ENCODE measurements at regions of chr17 and their contacts with region 1.

Region 1: GRCh38 chr17:59786536-59787319 is 79.3 kb downstream of the VMP1 start:
- DNase-seq: peak; percentile 83
- H3K4me3 ChIP-seq: no peak overlapping the region
- H3K27ac ChIP-seq: peak overlapping the region; percentile 98
- H3K4me1 ChIP-seq: no peaks in the 10 kb centered on the region
- H3K27me3 ChIP-seq: no peaks in the 10 kb centered on the region
- CTCF ChIP-seq: no peak

Region 2: GRCh38 chr17:59641799-59642489 is 144.8 kb before region 1 on chr17:
- intact Hi-C with region 1: no loop called
- DNase-seq: no peak
- H3K4me3 ChIP-seq: no peak overlapping the region
- H3K27ac ChIP-seq: peak overlapping the region; percentile 11
- H3K4me1 ChIP-seq: no peaks in the 10 kb centered on the region
- H3K27me3 ChIP-seq: no peaks in the 10 kb centered on the region
- CTCF ChIP-seq: no peak

Region 3: DNA sequence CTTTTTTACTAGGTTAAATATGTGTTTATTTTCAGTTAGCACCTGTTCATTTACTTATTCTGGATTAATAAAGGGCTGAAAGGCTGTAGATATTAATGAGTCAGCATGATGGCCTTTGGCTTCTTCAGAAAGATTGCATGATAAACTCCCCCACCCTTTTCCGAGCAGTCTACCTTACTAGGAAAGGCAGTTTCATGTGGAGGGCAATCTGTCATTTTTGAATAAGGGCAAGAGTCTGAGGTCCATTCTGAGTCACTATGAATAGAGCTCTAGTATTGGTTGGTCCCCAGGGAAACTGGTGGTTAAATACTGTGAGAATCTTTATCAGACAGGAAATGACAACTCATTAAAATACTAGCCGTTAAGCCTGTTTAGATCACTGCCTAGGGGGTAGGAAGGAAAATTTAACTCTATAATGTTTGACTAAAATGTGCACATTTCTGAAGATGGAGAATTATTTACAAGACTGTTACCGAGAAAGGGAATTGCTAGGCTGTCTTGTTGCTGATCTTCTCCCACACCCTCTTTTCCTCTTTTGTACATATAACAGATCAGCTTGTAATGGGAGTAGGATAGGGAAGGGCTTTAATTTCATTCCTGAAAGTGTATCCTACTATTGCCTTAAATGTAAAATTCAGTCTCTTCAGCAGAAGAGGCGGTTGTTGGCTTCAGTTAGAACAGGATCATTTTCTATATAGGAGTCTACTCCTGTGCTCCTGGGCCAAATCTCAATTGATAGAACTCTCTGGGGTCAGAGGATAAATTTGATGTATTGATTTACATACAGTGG is 42.7 kb after region 1 on chr17:
- intact Hi-C with region 1: loop called (anchors 5 kb)
- DNase-seq: peak; percentile 79
- H3K4me3 ChIP-seq: peak overlapping the region; percentile 7
- H3K27ac ChIP-seq: peak overlapping the region; percentile 94
- H3K4me1 ChIP-seq: peaks cover 12% of the 10 kb centered on the region
- H3K27me3 ChIP-seq: no peaks in the 10 kb centered on the region
- CTCF ChIP-seq: no peak

Region 4: DNA sequence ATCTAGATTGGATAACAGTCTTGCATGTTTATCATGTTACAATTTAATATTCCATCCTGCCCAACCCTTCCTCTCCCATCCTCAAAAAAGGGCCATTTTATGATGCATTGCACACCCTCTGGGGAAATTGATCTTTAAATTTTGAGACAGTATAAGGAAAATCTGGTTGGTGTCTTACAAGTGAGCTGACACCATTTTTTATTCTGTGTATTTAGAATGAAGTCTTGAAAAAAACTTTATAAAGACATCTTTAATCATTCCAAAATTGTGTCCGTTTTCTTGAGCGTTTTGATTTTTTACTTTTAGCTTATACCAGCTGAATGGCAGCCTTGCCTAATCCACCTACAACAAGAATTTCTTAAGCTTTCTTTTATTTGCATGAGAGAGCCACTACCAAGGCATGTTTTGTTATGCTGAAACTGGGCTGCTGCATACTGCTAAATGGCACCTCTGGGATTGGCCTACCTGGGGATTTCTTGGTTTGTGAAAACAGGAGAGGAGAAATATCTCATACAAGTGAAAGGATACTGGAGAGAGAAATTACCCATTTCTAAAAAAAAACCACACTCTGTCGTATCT is 53.7 kb after region 1 on chr17:
- intact Hi-C with region 1: loop called (anchors 2 kb)
- DNase-seq: no peak
- H3K4me3 ChIP-seq: peak overlapping the region; percentile 73
- H3K27ac ChIP-seq: peak overlapping the region; percentile 100
- H3K4me1 ChIP-seq: peaks cover 16% of the 10 kb centered on the region
- H3K27me3 ChIP-seq: no peaks in the 10 kb centered on the region
- CTCF ChIP-seq: no peak